Vagina (tissue), 2 donors: ENCODE measurements at regions of chr1 and their contacts with region 1.

Region 1: GRCh38 chr1:21368515-21369289 is 71.2 kb upstream of the NBPF3 start:
- DNase-seq: no peak
- H3K4me3 ChIP-seq: no peak overlapping the region
- H3K27ac ChIP-seq: no peak overlapping the region
- H3K4me1 ChIP-seq: no peaks in the 10 kb centered on the region
- H3K27me3 ChIP-seq: no peaks in the 10 kb centered on the region
- CTCF ChIP-seq: peak; percentile 95 to 100 (median 99)
- POLR2A ChIP-seq: no peak

Region 2: DNA sequence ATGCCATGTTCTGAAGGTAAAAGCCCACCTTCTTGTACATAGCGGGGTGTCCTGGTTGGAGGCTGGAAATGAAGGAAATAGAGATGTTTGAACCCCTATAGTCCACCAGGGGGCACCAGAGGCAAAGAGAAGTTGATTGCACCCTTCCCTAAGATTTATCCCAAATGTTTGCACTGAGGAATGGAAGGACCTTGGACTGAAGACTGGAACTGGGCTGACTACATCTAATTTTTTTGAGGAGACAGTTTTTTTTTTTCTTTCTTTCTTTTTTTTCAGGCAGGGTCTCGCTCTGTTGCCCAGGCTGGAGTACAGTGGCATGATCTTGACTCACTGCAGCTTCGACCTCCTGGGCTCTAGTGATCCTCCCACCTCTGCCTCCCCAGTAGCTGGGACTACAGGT is 136.7 kb before region 1 on chr1:
- intact Hi-C with region 1: loop called (anchors 2 kb)
- DNase-seq: no peak
- H3K4me3 ChIP-seq: no peak overlapping the region
- H3K27ac ChIP-seq: no peak overlapping the region
- H3K4me1 ChIP-seq: no peaks in the 10 kb centered on the region
- H3K27me3 ChIP-seq: no peaks in the 10 kb centered on the region
- CTCF ChIP-seq: peak; percentile 69 to 82 (median 78)
- POLR2A ChIP-seq: no peak